ENCODE measurements at regions of chr1 and their contacts with region 1.

Region 1: DNA sequence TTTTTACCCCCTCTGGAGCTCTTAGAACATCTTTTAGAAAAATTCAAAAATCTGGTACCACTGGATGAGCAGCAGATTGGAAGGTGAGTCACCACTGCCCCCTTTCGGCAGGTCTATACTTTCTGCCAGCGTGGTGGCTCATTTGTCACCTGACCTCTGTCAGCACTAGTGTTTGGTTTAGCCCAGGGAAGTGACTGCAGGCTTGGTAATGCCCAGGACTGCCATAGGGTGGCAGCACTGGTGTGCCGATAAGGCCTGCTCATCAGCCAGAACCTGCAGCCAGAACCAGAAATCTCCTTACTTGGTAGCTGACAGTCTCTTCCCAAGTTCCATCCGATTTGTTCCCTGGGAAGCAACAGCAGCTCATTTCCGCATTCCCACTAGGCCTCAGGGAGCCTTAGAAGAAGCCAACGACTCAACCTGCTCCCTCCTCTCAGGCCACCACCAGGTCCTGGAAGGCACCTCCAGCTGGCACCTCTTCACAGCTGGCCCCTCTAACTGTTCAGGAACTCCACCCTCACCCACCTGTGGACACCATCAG is 6.8 kb downstream of the SMIM12 start:
- DNase-seq: peak; percentile 95
- ATAC-seq: peak; percentile 100
- H3K4me3 Mint-ChIP-seq: no peak overlapping the region
- H3K27ac Mint-ChIP-seq: peak overlapping the region; percentile 47
- H3K4me1 Mint-ChIP-seq: peaks cover 23% of the 10 kb centered on the region
- H3K27me3 Mint-ChIP-seq: no peaks in the 10 kb centered on the region

Region 2: GRCh38 chr1:34696185-34696584 is 156.6 kb before region 1 on chr1:
- CTCF ChIA-PET with region 1: no interaction called
- DNase-seq: no peak
- ATAC-seq: no peak
- H3K4me3 Mint-ChIP-seq: no peak overlapping the region
- H3K27ac Mint-ChIP-seq: no peak overlapping the region
- H3K4me1 Mint-ChIP-seq: no peaks in the 10 kb centered on the region
- H3K27me3 Mint-ChIP-seq: peaks cover 10% of the 10 kb centered on the region

Region 3: GRCh38 chr1:34709547-34709946 is 143.2 kb before region 1 on chr1:
- CTCF ChIA-PET with region 1: no interaction called
- DNase-seq: no peak
- ATAC-seq: no peak
- H3K4me3 Mint-ChIP-seq: no peak overlapping the region
- H3K27ac Mint-ChIP-seq: no peak overlapping the region
- H3K4me1 Mint-ChIP-seq: no peaks in the 10 kb centered on the region
- H3K27me3 Mint-ChIP-seq: peaks cover 7% of the 10 kb centered on the region

Region 4: GRCh38 chr1:34786521-34787325 is 66.0 kb before region 1 on chr1:
- CTCF ChIA-PET with region 1: interaction called, 51 read pairs
- DNase-seq: peak; percentile 76
- ATAC-seq: peak; percentile 85
- H3K4me3 Mint-ChIP-seq: no peak overlapping the region
- H3K27ac Mint-ChIP-seq: no peak overlapping the region
- H3K4me1 Mint-ChIP-seq: peaks cover 6% of the 10 kb centered on the region
- H3K27me3 Mint-ChIP-seq: peaks cover 22% of the 10 kb centered on the region

Region 5: DNA sequence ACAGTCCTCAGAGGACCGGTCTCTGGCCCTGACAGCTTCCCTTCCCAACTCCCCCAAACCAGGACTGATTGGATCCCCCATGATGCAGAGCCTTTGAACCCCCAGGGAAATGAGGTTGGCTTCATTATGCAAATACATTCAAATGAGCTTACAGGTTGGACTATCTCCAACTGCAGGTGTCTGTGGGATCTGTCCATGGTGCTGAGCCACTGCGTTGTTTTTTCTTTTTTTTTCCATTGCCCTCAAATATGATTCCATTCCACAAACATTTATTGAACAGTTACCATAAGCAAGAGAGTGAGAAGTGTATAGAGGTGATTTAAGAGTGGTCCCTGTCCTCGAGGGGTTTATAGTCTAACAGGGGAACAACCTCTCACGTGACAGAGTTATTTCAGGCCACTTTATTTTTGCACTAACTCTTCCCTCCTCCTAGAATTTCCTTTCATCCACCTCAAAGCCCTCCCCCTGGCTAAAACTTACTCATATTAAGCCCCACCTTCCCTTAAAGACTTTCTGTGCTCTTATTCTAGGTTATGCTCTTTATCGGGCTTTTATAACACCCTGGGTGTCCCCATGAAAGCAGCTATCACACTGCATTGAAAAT is 54.8 kb after region 1 on chr1:
- CTCF ChIA-PET with region 1: no interaction called
- DNase-seq: no peak
- ATAC-seq: no peak
- H3K4me3 Mint-ChIP-seq: no peak overlapping the region
- H3K27ac Mint-ChIP-seq: no peak overlapping the region
- H3K4me1 Mint-ChIP-seq: no peaks in the 10 kb centered on the region
- H3K27me3 Mint-ChIP-seq: peaks cover under 1% of the 10 kb centered on the region

Region 6: DNA sequence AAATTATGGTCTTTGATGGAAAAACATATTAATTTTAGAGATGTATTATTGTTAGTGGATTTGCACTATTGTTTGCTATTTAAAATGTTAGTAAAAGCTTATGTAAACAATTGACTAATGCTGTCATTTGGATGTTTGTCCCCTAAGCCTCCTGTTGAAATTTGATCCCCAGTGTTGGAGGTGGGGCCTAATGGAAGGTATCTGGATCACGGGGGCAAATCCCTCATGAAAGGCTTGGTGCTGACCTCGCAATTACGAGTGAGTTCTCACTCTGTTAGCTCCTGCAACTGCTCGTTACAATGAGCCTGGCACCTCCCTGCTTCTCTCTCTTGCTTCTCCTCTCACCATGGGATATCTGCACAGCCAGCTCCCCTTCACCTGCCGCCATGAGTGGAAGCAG is 118.1 kb after region 1 on chr1:
- CTCF ChIA-PET with region 1: no interaction called
- DNase-seq: no peak
- ATAC-seq: no peak
- H3K4me3 Mint-ChIP-seq: no peak overlapping the region
- H3K27ac Mint-ChIP-seq: no peak overlapping the region
- H3K4me1 Mint-ChIP-seq: peaks cover 5% of the 10 kb centered on the region
- H3K27me3 Mint-ChIP-seq: peaks cover 3% of the 10 kb centered on the region